ENCODE measurements at regions of chr20 and their contacts with region 1.

Region 1: DNA sequence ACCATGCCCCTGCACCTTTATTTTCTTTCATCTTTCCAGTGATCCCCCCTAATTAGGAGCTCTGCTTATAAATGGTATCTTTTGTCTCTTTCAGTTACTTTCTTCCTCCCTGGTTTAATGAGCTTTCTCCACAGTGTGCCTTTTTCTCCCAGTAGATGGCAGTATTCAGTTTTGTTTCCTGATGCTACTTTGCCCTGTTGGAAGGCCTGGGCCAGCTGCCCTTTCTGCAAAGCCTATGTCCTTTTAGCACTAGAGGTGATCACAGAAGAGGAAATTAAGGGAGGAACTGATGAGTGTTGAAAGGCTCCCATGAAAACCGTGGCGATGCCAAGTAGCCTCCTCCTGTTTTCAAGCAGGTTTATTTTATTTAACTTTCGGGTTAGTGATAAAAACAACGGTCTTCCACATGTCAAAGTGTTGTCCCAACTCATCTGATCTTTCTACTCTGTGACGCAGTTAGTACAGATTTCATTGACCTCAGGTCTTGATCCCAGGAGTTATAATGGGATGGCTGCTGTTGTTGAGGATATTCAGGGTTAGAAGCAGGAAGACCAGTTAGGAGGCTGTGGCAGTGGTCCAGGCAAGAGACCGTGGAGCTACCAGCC is 184.2 kb upstream of the BMP2 start:
- DNase-seq: peak; percentile 49
- H3K4me3 ChIP-seq: no peak overlapping the region
- H3K27ac ChIP-seq: no peak overlapping the region
- H3K4me1 ChIP-seq: no peaks in the 10 kb centered on the region
- H3K27me3 ChIP-seq: no peaks in the 10 kb centered on the region
- CTCF ChIP-seq: peak; percentile 54

Region 2: DNA sequence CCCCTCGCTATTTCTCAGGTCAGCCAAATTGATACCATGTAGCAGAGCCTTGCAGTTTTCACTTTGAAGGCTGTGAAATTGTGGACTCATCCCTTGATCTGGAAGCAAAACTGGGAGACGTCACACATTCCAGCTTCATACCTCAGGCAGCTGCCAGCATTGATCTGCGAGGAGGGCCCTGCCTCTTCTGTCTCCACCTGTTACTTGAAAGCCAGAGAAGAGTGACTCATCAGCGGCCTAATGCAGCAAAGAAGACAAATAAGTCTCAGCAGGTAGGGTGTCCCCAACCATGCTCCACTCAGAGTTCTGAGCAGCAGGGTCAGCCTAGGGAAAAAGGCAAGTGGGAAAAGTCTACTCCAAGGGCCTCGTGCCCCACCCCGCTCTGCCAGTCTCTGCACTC is 114.8 kb after region 1 on chr20:
- intact Hi-C with region 1: no loop called
- DNase-seq: no peak
- H3K4me3 ChIP-seq: no peak overlapping the region
- H3K27ac ChIP-seq: no peak overlapping the region
- H3K4me1 ChIP-seq: no peaks in the 10 kb centered on the region
- H3K27me3 ChIP-seq: no peaks in the 10 kb centered on the region
- CTCF ChIP-seq: no peak

Region 3: GRCh38 chr20:6819605-6820004 is 236.4 kb after region 1 on chr20:
- intact Hi-C with region 1: loop called (anchors 5 kb)
- DNase-seq: peak; percentile 29
- H3K4me3 ChIP-seq: no peak overlapping the region
- H3K27ac ChIP-seq: no peak overlapping the region
- H3K4me1 ChIP-seq: no peaks in the 10 kb centered on the region
- H3K27me3 ChIP-seq: no peaks in the 10 kb centered on the region
- CTCF ChIP-seq: peak; percentile 40

Region 4: DNA sequence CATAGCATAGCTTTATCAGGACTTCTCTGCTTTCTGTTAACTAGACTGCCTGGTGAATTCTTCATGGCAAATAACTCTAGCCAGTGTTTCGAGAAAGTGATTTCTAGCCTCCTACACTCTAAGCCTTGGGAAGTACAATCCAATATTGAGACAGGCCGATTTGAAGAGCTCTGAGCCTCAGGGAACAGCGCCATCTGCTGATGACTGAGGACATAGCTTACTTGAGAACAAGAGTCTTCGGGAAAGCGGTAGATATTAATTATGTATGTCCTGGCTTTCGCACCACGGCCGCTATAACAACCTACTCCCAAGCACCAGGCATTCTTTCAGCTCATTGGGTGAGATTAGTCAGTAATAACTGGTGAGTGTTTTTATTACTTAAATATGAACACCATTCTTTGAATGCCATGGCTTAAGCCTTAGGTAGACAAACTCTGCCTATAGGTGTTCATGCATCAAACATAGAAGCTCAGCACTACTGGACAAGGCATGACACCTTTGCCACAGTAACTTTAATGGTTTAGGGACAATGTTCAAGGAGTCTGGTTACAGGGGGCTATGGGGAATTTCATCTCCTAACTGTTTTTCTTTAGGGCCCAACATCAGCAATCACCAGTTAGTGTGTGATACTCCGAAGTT is 702.8 kb after region 1 on chr20:
- intact Hi-C with region 1: loop called (anchors 10 kb)
- DNase-seq: peak; percentile 72
- H3K4me3 ChIP-seq: no peak overlapping the region
- H3K27ac ChIP-seq: no peak overlapping the region
- H3K4me1 ChIP-seq: no peaks in the 10 kb centered on the region
- H3K27me3 ChIP-seq: no peaks in the 10 kb centered on the region
- CTCF ChIP-seq: peak; percentile 79